Heart left ventricle (tissue), 16 donors: ENCODE measurements at regions of chr12 and their contacts with region 1.

Region 1: DNA sequence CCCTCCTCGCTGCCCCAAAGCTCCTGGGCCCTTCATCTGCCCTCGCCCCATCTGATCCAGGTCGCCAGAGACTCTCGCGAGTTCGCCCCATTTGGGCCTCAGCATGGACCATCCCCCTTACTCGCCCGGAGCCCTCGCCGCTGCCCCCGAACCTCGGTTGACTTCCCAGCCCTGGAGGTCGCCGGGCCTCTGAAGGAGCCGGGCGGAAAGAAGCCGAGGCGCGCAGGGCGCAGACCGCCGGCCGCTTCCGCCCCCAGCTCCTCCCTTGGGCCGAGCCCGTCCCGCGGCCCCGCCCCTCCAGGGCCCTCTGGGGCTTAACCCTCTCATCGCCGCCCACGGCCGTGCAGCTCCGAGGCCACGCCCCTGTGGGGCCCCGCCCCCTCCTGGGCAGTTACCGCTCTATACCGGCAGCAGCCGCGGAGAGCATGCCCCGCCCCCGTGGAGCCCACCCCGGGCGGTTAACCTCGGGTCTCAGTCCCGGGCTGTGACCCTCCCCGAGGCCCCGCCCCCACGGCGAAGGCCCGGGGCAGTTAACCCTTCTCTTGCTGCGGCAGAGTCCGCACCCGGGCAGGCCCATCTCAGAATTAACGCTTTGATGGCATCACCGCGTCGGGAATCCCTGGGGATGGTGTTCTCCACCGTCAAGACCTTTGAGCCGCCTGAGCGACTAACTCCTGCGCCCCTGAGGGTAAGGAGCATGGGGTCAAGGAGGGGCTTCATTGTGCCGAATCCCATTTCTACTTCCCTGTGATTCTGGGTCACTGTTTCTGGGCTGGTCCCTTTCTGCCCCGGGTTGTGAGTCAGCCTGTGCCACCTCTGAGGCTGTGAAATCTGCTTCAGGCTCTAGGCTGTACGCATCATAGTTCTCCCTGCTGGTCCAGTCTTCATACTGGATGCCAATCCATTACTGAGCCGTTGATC is at the start of gene SPSB2:
- DNase-seq: peak; percentile 98 to 99 (median 98)
- ATAC-seq: peak; percentile 87 to 94 (median 92)
- H3K4me3 ChIP-seq: peak within 1 kb of the TSS; percentile 49 to 93 (median 74)
- H3K27ac ChIP-seq: peak within 1 kb of the TSS in 11 of 12 donors; percentile 78 to 91 (median 84)
- H3K4me1 ChIP-seq: peaks cover 15 to 50% (median 38%) of the 10 kb centered on the region in 12 donors
- H3K27me3 ChIP-seq: no peaks in the 10 kb centered on the region
- CTCF ChIP-seq: peak in 1 of 12 donors; percentile 20
- POLR2A ChIP-seq: peak; percentile 18 to 72
- total RNA-seq, gene SPSB2: 2.3 to 6.6 (median 3.1) TPM

Region 2: DNA sequence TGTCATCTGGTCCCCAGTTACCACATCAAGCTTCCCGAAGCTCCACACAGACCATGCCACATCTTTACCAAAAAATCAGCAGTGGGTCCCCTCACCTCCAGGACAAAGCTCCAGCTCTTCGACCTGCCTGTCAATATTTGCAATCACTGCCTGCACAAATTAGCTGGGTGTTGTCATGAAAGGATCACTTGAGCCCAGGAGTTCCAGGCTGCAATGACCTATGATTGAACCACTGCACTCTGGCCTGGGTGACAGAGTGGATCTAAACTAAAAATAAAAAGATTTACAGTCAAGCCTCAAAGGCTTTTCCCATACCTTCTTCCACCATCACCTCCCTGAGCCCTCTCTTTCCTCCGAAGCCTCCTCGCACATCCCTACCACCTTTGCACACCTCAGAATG is 76.8 kb before region 1 on chr12:
- intact Hi-C with region 1: no loop called
- DNase-seq: no peak
- ATAC-seq: no peak
- H3K4me3 ChIP-seq: no peak overlapping the region
- H3K27ac ChIP-seq: no peak overlapping the region
- H3K4me1 ChIP-seq: peaks cover 0 to 16% (median 0%) of the 10 kb centered on the region in 12 donors
- H3K27me3 ChIP-seq: peaks cover 0 to 4% (median 0%) of the 10 kb centered on the region in 9 donors
- CTCF ChIP-seq: no peak
- POLR2A ChIP-seq: no peak

Region 3: DNA sequence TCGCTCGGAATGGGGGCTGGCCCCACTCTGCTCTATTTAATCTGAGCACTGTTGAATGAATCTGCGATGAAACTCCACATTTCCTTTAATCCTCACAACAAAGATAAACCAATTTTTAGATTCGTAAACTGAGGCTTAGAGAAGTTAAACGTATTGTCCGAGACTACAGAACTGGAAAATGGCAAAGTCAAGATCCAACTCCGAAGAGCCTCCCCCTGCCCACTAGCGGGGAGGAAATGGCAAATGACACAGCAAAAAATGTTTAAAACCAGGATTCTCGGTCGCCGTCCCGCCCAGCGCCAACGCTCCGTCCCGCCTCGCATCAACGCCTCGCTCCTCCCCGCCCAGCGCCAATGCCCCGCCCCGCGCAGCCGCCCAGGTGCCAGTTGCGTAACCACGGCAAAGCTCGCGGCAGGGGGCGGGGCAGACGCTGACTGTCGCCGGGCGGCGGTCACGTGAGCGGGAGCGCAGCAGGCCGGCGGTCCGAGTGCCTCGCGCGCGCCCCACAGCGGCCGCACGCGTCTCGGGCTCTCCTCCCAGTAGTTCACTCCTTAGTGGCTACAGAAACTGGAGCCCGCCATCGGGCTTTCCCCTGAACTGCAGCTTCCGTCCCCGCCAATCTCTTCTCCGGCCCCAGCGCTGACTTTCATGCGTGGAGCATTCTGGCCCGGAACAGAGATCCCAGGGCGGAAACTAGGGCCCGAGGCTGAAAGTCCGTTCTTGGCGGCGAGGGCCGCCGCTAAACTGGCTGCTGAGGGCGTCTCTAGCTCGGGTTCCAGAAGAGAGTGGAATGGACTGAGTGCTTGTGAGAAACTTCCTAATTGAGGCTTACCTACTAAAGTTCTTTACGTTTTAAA is 17.7 kb after region 1 on chr12:
- intact Hi-C with region 1: loop called in 3 of 10 experiments (anchors 1 to 2 kb)
- DNase-seq: peak; percentile 98 to 100 (median 99)
- ATAC-seq: peak; percentile 88 to 99 (median 98)
- H3K4me3 ChIP-seq: peak overlapping the region; percentile 4 to 70 (median 57)
- H3K27ac ChIP-seq: peak overlapping the region; percentile 66 to 97 (median 90)
- H3K4me1 ChIP-seq: peaks cover 0 to 14% (median 6%) of the 10 kb centered on the region in 12 donors
- H3K27me3 ChIP-seq: no peaks in the 10 kb centered on the region
- CTCF ChIP-seq: peak; percentile 79 to 99 (median 95)
- POLR2A ChIP-seq: peak in 1 of 2 donors; percentile 84

Region 4: GRCh38 chr12:6927379-6928024 is 54.1 kb after region 1 on chr12 and contains the start of gene ATN1:
- intact Hi-C with region 1: loop called in 1 of 10 experiments (anchors 5 kb)
- DNase-seq: peak; percentile 89 to 91 (median 90)
- ATAC-seq: peak; percentile 23 to 65 (median 60)
- H3K4me3 ChIP-seq: peak within 1 kb of the TSS; percentile 67 to 98 (median 83)
- H3K27ac ChIP-seq: peak within 1 kb of the TSS; percentile 87 to 98 (median 96)
- H3K4me1 ChIP-seq: peaks cover 12 to 79% (median 58%) of the 10 kb centered on the region in 12 donors
- H3K27me3 ChIP-seq: no peaks in the 10 kb centered on the region
- CTCF ChIP-seq: no peak
- POLR2A ChIP-seq: peak in 1 of 2 donors; percentile 38
- total RNA-seq, gene ATN1: 38.4 to 82.9 (median 67.2) TPM

Region 5: GRCh38 chr12:6937481-6938297 is 64.3 kb after region 1 on chr12:
- intact Hi-C with region 1: loop called in 1 of 10 experiments (anchors 5 kb)
- DNase-seq: peak; percentile 93 to 96 (median 95)
- ATAC-seq: peak; percentile 87 to 91 (median 88)
- H3K4me3 ChIP-seq: peak overlapping the region; percentile 27 to 88 (median 73)
- H3K27ac ChIP-seq: peak overlapping the region; percentile 86 to 98 (median 94)
- H3K4me1 ChIP-seq: peaks cover 3 to 82% (median 51%) of the 10 kb centered on the region in 12 donors
- H3K27me3 ChIP-seq: no peaks in the 10 kb centered on the region
- CTCF ChIP-seq: peak; percentile 89 to 100 (median 96)
- POLR2A ChIP-seq: peak in 1 of 2 donors; percentile 79